ENCODE measurements at regions of chr13 and their contacts with region 1.

Region 1: DNA sequence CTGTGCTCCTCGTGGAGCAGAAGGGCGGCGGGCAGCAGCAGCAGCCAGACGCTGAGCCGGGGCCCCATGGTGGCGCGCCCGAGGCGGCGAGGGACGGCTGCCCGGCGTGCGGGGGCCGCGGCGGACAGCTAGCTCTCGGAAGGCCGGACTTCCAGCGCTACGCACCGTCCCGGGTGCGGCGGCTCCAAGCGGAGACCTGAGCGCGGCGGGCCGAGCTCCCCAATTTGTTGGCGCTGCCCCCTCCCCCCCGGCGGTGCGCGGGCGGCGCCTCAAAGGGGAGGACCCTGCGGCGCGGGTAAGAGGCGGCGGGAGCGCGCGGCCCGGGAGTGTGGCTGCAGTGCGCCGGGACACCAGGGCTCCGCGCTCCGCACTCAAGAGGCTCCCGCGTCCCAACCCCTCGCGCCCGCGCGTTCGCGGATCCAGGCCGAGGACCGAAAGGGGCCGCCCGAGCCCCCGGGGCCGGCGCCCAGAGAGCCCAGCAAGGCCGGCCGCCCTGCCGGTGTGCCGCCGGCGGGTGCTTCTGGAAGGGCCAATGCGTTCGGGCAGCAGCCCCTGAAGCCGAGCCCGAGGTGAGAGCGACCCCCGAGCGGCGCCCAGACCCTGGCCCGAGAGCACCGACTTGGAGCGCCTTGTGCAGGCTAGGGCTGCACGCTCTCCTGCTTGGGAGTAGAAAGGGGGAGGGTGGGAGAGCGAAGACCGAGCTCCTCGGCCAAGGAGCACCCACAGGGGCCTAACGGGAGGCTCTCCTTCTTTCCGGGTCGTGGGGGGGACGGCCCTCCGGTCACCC is at the starts of genes COL4A1 and COL4A2:
- DNase-seq: peak; percentile 89
- ATAC-seq: peak; percentile 89
- total RNA-seq, gene COL4A1: 128 TPM
- total RNA-seq, gene COL4A2: 126 TPM

Region 2: GRCh38 chr13:110225609-110226562 is 81.3 kb before region 1 on chr13:
- intact Hi-C with region 1: loop called (anchors 2 kb)
- DNase-seq: no peak
- ATAC-seq: no peak

Region 3: GRCh38 chr13:110244071-110244830 is 62.9 kb before region 1 on chr13:
- intact Hi-C with region 1: no loop called
- DNase-seq: no peak
- ATAC-seq: peak; percentile 11

Region 4: DNA sequence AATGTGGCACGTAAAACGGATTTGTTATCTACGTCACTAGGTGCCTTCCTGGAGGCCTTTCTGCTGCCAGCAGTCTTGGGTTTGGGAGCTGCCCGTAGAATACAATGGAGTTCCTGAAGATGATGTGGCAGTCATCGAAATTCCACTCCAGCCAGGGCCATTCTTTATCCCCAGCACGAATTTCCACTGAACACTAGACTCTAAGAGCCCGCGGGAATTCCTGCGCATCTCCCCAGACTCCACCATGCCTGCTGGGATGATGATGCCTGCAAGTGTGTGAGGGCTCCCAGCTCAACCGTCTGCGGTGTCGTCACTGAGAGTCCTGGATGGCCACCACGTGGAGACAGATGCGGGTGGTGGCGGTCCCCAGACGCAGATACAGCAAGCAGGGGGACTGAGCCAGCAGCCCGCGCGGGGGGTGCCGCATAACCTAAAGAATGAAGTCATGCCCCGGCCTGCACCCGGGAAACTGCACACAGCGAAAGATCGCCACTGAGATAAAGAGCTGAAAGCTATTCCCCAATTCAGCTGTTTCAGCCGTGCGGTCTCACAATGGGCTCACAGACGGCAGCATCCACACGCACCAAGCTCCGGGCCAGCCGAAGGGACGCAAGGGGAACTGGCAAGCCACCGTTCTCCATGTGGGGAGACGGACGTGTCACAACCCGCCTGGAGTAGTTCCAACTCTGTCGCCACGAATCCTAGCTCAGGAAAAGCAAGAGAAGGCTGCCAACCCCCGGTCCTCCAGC is 41.3 kb before region 1 on chr13:
- intact Hi-C with region 1: loop called (anchors 5 kb)
- DNase-seq: peak; percentile 80
- ATAC-seq: no peak

Region 5: DNA sequence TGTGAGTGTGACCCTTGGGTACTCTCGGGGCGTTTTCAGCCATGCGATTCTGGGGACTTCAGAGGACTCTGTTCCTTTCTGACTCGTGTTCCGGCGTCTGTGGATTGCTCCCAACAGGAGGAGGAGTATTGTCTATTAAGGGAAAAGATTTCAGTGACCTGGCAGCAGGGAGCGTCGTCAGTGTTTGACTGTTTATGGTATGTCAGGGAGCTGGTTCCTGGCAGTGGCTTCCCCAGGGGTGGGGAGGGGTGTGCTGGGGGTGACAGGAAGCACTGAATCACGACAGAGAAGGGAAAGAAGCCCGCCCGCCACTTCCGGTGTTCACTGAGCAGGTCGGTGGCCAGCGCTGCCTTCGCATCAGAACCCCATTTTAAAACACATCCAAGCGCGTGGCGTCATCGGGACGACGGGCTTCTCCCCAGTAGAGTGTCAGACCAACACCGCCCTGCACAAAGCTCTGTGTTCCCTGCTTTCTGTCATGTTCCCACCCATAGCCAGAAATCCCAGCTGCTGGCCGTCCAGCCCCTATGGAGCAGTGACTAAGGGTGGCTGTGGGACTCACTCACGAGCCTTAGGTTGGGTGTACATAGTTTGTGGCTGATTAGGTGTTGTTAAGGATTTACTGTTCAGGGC is 33.8 kb after region 1 on chr13:
- intact Hi-C with region 1: loop called (anchors 5 kb)
- DNase-seq: peak; percentile 91
- ATAC-seq: peak; percentile 50

Region 6: GRCh38 chr13:110412132-110412914 is 105.2 kb after region 1 on chr13:
- intact Hi-C with region 1: loop called (anchors 1 kb)
- DNase-seq: peak; percentile 91
- ATAC-seq: peak; percentile 85

Measured in Right ventricle myocardium inferior (tissue), 1 donor.